CD8-positive, alpha-beta T cell (primary cell): ENCODE measurements at regions of chr12 and their contacts with region 1.

Region 1: DNA sequence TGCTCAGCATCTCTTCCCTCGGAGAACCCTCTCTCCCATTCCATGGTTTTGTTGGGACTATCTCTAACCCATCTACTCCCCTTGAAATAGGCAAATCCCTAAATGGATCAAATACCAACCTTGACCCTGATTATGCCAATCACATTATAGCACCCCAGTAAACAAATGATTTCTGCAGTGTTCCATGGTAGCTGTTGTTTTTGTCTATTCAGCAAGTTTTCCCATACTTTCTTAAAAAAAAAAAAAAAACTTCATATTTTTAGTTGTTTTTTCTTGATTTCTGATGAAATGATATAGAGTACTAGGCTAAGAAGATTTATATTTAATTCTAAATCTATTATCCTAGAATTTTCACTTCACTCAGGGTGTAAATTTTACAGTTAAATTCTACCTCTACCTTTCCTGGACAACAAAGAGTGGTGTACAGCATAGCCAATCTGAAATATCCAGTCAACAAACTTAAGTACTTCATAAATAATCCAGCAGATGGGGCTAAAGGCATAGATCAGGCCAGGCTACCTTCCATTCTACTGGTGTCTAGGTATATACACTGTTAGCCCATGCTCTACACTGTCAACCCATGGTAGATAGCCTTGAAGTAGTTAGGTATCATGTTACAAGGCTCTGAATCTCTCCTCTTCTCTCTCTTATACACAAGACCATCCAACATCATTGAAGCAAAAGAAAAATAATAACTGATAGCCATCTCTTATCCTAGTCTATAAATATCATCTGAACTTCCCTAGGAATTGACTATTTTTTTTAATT is 82.2 kb downstream of the PLEKHG7 start:
- DNase-seq: peak in 3 of 9 experiments; percentile 28 to 77 (median 68)
- ATAC-seq: peak; percentile 99
- H3K4me3 ChIP-seq: no peak overlapping the region
- H3K4me3 Mint-ChIP-seq: no peak overlapping the region
- H3K27ac ChIP-seq: no peak overlapping the region
- H3K27ac Mint-ChIP-seq: no peak overlapping the region
- H3K4me1 ChIP-seq: no peaks in the 10 kb centered on the region
- H3K4me1 Mint-ChIP-seq: peaks cover 11% of the 10 kb centered on the region
- H3K27me3 ChIP-seq: no peaks in the 10 kb centered on the region
- H3K27me3 Mint-ChIP-seq: no peaks in the 10 kb centered on the region
- CTCF ChIP-seq: peak; percentile 61

Region 2: GRCh38 chr12:91361864-91362263 is 1423.1 kb before region 1 on chr12:
- CTCF ChIA-PET with region 1: no interaction called
- POLR2A ChIA-PET with region 1: no interaction called
- intact Hi-C with region 1: loop called in 1 of 2 experiments (anchors 10 kb)
- DNase-seq: peak in 2 of 9 experiments; percentile 50 to 61
- ATAC-seq: peak; percentile 57
- H3K4me3 ChIP-seq: no peak overlapping the region
- H3K4me3 Mint-ChIP-seq: no peak overlapping the region
- H3K27ac ChIP-seq: no peak overlapping the region
- H3K27ac Mint-ChIP-seq: no peak overlapping the region
- H3K4me1 ChIP-seq: no peaks in the 10 kb centered on the region
- H3K4me1 Mint-ChIP-seq: no peaks in the 10 kb centered on the region
- H3K27me3 ChIP-seq: no peaks in the 10 kb centered on the region
- H3K27me3 Mint-ChIP-seq: peaks cover 9% of the 10 kb centered on the region
- CTCF ChIP-seq: peak; percentile 76

Region 3: GRCh38 chr12:92796650-92797049 is 11.7 kb after region 1 on chr12:
- CTCF ChIA-PET with region 1: interaction called, 14 read pairs
- POLR2A ChIA-PET with region 1: no interaction called
- intact Hi-C with region 1: no loop called
- DNase-seq: no peak
- ATAC-seq: no peak
- H3K4me3 ChIP-seq: no peak overlapping the region
- H3K4me3 Mint-ChIP-seq: no peak overlapping the region
- H3K27ac ChIP-seq: no peak overlapping the region
- H3K27ac Mint-ChIP-seq: no peak overlapping the region
- H3K4me1 ChIP-seq: no peaks in the 10 kb centered on the region
- H3K4me1 Mint-ChIP-seq: peaks cover 4% of the 10 kb centered on the region
- H3K27me3 ChIP-seq: no peaks in the 10 kb centered on the region
- H3K27me3 Mint-ChIP-seq: no peaks in the 10 kb centered on the region
- CTCF ChIP-seq: no peak

Region 4: GRCh38 chr12:93098077-93098476 is 313.1 kb after region 1 on chr12:
- CTCF ChIA-PET with region 1: interaction called, 5 read pairs
- POLR2A ChIA-PET with region 1: no interaction called
- intact Hi-C with region 1: loop called (anchors 2 to 10 kb)
- DNase-seq: peak; percentile 41 to 79 (median 69)
- ATAC-seq: peak; percentile 83
- H3K4me3 ChIP-seq: no peak overlapping the region
- H3K4me3 Mint-ChIP-seq: no peak overlapping the region
- H3K27ac ChIP-seq: no peak overlapping the region
- H3K27ac Mint-ChIP-seq: no peak overlapping the region
- H3K4me1 ChIP-seq: no peaks in the 10 kb centered on the region
- H3K4me1 Mint-ChIP-seq: peaks cover 9% of the 10 kb centered on the region
- H3K27me3 ChIP-seq: no peaks in the 10 kb centered on the region
- H3K27me3 Mint-ChIP-seq: no peaks in the 10 kb centered on the region
- CTCF ChIP-seq: peak; percentile 65